A673 (cell line): ENCODE measurements at regions of chr2 and their contacts with region 1.

Region 1: GRCh38 chr2:111662771-111663470 is 221.1 kb downstream of the ANAPC1 start:
- DNase-seq: no peak
- H3K4me3 ChIP-seq: no peak overlapping the region
- H3K27ac ChIP-seq: no peak overlapping the region
- H3K4me1 ChIP-seq: peaks cover 9% of the 10 kb centered on the region
- H3K27me3 ChIP-seq: no peaks in the 10 kb centered on the region
- CTCF ChIP-seq: no peak

Region 2: DNA sequence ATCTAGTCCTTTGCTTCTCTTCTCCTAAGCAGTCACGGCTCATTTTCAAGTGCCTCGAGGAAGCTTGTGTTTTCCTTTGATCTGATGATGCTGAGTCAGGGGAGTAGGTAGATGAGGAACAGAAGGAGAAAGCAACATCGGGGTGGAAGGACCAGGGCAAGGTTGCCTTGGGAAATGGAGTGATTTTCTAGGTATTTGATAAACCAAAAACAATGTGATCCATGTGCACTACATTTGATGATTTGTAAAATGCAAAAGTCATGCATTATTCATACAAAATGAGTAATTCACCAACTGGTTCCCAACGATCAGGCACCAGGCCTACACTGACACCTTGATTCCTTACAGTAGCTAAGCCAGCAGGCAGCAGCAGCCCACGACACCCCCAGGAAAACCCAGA is 15.7 kb after region 1 on chr2:
- CTCF ChIA-PET with region 1: no interaction called
- POLR2A ChIA-PET with region 1: no interaction called
- intact Hi-C with region 1: loop called (anchors 2 kb)
- DNase-seq: no peak
- H3K4me3 ChIP-seq: no peak overlapping the region
- H3K27ac ChIP-seq: no peak overlapping the region
- H3K4me1 ChIP-seq: no peaks in the 10 kb centered on the region
- H3K27me3 ChIP-seq: no peaks in the 10 kb centered on the region
- CTCF ChIP-seq: no peak

Region 3: GRCh38 chr2:112021781-112022231 is 358.9 kb after region 1 on chr2:
- CTCF ChIA-PET with region 1: no interaction called
- POLR2A ChIA-PET with region 1: no interaction called
- intact Hi-C with region 1: no loop called
- DNase-seq: no peak
- H3K4me3 ChIP-seq: no peak overlapping the region
- H3K27ac ChIP-seq: no peak overlapping the region
- H3K4me1 ChIP-seq: peaks cover 8% of the 10 kb centered on the region
- H3K27me3 ChIP-seq: no peaks in the 10 kb centered on the region
- CTCF ChIP-seq: no peak

Region 4: GRCh38 chr2:113105047-113105785 is 1442.3 kb after region 1 on chr2:
- CTCF ChIA-PET with region 1: no interaction called
- POLR2A ChIA-PET with region 1: no interaction called
- intact Hi-C with region 1: no loop called
- DNase-seq: peak; percentile 16
- H3K4me3 ChIP-seq: no peak overlapping the region
- H3K27ac ChIP-seq: no peak overlapping the region
- H3K4me1 ChIP-seq: no peaks in the 10 kb centered on the region
- H3K27me3 ChIP-seq: peaks cover 8% of the 10 kb centered on the region
- CTCF ChIP-seq: no peak